ENCODE measurements at regions of chr1 and their contacts with region 1.

Region 1: DNA sequence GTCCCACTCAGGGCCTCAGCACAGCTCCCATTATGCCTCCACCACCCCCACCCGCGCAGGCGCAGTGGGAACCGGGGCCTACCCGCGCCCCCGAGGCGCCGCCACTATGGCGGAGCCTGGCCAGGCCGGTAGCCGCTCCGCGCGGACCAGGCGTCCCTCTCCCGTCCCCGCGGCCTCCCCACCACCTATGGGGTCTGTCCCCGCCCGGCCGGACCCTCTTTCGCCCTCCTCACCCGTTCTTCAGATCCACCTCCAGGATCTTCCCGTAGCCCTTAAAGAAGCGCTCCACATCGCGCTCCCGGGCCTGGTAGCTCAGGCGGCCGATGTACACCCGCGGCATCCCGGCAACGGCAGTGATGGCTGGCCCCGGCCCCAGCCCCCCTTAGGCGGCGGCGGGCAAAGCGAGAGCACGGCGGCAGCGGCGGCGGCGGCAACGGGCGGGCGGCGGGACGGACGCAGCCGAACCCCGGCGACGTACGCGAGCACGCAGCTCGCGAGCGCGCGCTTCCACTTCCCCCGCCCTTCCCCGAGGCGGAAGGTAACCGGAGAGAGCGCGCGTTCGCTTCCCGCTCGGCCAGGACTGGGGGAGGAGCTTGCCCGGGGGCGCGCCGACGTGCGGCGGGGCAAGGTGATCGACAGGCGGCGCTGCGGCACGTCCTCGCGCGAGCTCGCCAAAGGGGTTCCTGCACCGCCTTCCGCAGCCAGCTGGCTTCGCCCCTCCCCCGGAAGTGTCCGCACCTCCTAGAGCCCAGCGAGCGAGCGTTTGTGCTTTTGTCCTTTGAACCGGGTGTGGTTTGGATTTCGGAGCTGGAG is at the start of gene SRSF4:
- DNase-seq: peak; percentile 96 to 97
- ATAC-seq: peak; percentile 91 to 93
- H3K4me3 ChIP-seq: peak within 1 kb of the TSS; percentile 86
- H3K27ac ChIP-seq: peak within 1 kb of the TSS; percentile 99 to 100
- H3K4me1 ChIP-seq: peaks cover 21% of the 10 kb centered on the region
- CTCF ChIP-seq: peak; percentile 60
- EP300 ChIP-seq: no peak
- POLR2A ChIP-seq: peak; percentile 55
- RAD21 ChIP-seq: peak; percentile 14 to 44; a peak in 3 of 5 replicates
- polyA plus RNA-seq, gene SRSF4: 43.6 and 45.6 TPM in 2 replicates

Region 2: DNA sequence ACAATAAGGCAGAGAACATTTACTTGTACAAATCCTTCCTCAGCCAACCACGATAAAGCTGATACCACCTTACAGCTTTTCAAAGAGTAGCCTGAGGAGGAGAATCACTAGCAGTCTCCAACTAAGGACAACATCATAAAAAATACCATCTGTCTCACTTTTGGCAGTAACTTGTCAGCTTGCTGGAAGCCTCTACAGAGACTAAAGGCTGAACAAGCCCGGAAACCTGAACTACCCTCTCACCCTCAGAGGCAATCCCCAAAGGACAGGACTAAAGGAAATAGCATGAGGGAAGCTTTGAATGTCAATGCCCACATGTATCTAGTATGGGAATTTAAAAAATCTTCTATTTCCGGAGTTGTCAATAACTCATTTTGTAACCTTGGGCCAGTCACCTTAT is 10.5 kb before region 1 on chr1:
- CTCF ChIA-PET with region 1: interaction called, 17 read pairs
- POLR2A ChIA-PET with region 1: interaction called, 12 read pairs
- DNase-seq: no peak
- ATAC-seq: no peak
- H3K4me3 ChIP-seq: no peak overlapping the region
- H3K27ac ChIP-seq: no peak overlapping the region
- H3K4me1 ChIP-seq: 0 out of 3 replicates have a peak, but pooled peaks cover 3% of the 10 kb centered on the region
- CTCF ChIP-seq: no peak
- EP300 ChIP-seq: no peak
- POLR2A ChIP-seq: no peak
- RAD21 ChIP-seq: no peak

Region 3: DNA sequence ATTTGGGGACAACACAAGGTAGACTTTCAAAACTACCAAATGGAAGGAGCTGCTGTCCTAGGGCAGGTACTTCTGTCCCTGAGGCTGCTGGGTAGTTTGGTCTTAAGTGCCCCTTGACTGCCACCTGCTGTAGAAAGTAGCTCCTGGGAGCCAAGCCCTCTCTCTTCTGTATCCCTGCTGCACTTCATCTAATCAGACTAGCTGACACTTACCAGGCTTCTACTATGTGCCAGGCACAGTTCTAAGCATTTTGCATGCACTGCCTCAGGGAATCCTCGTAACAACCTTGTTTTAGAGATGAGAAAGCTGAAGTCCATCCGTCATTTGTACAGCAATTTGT is 15.9 kb after region 1 on chr1:
- CTCF ChIA-PET with region 1: interaction called, 14 read pairs
- POLR2A ChIA-PET with region 1: interaction called, 4 read pairs
- DNase-seq: peak; percentile 21 to 64
- ATAC-seq: peak; percentile 93 to 95
- H3K4me3 ChIP-seq: no peak overlapping the region
- H3K27ac ChIP-seq: no peak overlapping the region
- H3K4me1 ChIP-seq: peaks cover 10% of the 10 kb centered on the region
- CTCF ChIP-seq: peak; percentile 35; the same call in 2 of the 3 replicates
- EP300 ChIP-seq: no peak
- POLR2A ChIP-seq: no peak
- RAD21 ChIP-seq: peak; percentile 28 to 44; a peak in 4 of 5 replicates

Region 4: GRCh38 chr1:29202584-29203340 is 21.1 kb after region 1 on chr1:
- CTCF ChIA-PET with region 1: interaction called, 14 read pairs
- POLR2A ChIA-PET with region 1: interaction called, 4 read pairs
- DNase-seq: peak; percentile 88 to 90
- ATAC-seq: peak; percentile 96 to 99
- H3K4me3 ChIP-seq: no peak overlapping the region
- H3K27ac ChIP-seq: peak overlapping the region in 1 of 2 experiments; percentile 65; a peak in 3 of 6 replicates
- H3K4me1 ChIP-seq: peaks cover 6% of the 10 kb centered on the region
- CTCF ChIP-seq: peak; percentile 80
- EP300 ChIP-seq: no peak
- POLR2A ChIP-seq: no peak
- RAD21 ChIP-seq: peak; percentile 83 to 91